AG04450 (cell line): ENCODE measurements at regions of chr17 and their contacts with region 1.

Region 1: DNA sequence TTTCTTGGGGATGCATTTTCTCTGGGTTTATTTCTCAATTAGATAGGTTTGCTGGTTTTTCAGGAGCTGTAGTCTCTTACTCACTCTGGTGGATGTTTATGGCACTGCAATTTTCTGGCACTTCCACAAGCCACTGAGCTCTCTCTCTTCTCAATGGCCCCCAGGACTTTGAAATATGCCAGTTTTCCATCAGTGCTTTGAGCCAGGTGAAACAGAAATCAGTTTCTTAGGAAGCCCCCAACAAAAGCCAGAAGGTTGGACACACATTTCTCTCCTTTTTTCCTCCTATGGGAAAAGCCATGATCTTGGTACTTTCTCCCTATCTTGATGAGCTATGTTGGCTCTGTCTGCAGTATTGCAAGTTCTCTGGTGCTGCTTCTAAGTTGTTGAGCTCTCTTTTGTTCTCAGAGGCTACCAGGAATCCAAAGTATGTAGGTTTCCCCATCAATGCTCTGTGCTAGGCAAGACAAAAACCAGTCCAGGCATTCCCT is 90.7 kb upstream of the SMIM36 start:
- DNase-seq: no peak
- H3K4me3 ChIP-seq: no peak overlapping the region
- H3K27ac ChIP-seq: no peak overlapping the region
- H3K27me3 ChIP-seq: no peaks in the 10 kb centered on the region
- CTCF ChIP-seq: peak; percentile 93

Region 2: GRCh38 chr17:55549140-55549539 is 52.8 kb before region 1 on chr17:
- CTCF ChIA-PET with region 1: interaction called, 18 read pairs
- POLR2A ChIA-PET with region 1: no interaction called
- DNase-seq: no peak
- H3K4me3 ChIP-seq: no peak overlapping the region
- H3K27ac ChIP-seq: no peak overlapping the region
- H3K27me3 ChIP-seq: no peaks in the 10 kb centered on the region
- CTCF ChIP-seq: peak; percentile 40

Region 3: DNA sequence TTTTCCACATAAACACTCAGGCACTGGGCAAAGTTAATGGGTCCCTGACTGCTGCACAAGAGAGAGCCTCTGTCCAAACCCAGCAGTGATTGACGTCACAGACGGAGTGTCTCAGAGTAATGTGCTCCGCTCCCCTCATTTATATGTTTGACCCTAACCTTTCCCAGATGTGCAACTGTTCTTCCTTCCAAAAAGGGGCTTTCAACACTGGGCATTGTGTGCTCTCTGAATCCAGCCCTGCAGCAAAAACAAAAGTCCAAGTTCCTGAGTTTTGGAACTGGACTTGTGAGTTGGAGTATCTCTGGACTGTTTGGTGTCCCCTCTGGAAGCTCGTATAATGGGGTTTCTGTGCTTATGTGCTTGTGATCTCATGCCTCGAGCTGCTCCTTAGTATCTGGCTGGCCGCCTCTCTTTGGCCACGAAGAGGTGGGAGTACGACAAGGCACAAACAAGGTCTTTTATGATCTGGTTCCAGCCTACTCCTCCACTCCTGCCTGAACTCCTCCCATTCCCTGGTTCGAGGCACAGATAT is 14.2 kb before region 1 on chr17:
- CTCF ChIA-PET with region 1: interaction called, 54 read pairs
- POLR2A ChIA-PET with region 1: interaction called, 7 read pairs
- DNase-seq: no peak
- H3K4me3 ChIP-seq: no peak overlapping the region
- H3K27ac ChIP-seq: peak overlapping the region; percentile 4
- H3K27me3 ChIP-seq: no peaks in the 10 kb centered on the region
- CTCF ChIP-seq: no peak

Region 4: GRCh38 chr17:55632893-55633292 is 31.0 kb after region 1 on chr17:
- CTCF ChIA-PET with region 1: interaction called, 14 read pairs
- POLR2A ChIA-PET with region 1: no interaction called
- DNase-seq: no peak
- H3K4me3 ChIP-seq: no peak overlapping the region
- H3K27ac ChIP-seq: no peak overlapping the region
- H3K27me3 ChIP-seq: peaks cover 2% of the 10 kb centered on the region
- CTCF ChIP-seq: no peak

Region 5: DNA sequence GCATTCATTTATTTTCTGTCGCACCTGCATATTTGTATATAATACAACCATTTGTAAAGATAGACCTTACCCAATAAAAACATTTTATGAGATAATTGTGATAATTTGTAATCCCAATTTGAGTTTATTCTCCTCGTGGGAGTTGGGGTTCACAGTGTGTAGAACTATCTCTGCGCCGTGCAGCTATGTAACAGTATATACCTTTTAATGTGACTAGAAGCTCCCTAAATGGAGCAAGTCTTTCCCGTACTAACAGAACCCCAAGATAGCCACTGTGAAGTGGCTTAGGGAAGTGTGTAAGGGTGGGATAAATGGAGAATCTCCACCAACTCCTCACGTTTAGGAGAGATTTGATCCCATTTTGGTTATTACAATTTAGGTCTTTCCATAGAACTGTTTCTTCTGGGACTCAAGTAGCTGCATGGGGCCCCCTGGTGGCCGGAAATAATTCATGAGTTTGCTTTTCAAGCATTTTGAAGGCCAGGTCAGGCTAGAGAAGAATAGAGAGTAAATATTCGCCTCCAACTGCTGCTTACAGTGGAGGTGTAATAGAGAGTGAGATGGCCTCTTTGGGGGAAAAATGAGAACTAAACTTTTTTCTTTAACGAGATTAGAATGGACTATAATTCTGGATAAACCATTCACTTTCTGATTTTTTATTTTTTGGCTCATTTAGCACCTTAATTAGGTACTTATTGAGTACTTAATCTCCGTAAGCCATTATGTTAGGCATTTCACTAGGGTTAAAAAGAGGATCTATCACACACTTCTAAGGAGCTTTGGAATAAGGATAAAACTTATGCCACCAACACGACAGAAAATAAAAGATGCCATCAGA is 116.2 kb after region 1 on chr17:
- CTCF ChIA-PET with region 1: interaction called, 80 read pairs
- POLR2A ChIA-PET with region 1: no interaction called
- DNase-seq: peak; percentile 48
- H3K4me3 ChIP-seq: no peak overlapping the region
- H3K27ac ChIP-seq: no peak overlapping the region
- H3K27me3 ChIP-seq: no peaks in the 10 kb centered on the region
- CTCF ChIP-seq: peak; percentile 80

Region 6: GRCh38 chr17:55735731-55736405 is 133.9 kb after region 1 on chr17:
- CTCF ChIA-PET with region 1: interaction called, 13 read pairs
- POLR2A ChIA-PET with region 1: no interaction called
- DNase-seq: no peak
- H3K4me3 ChIP-seq: no peak overlapping the region
- H3K27ac ChIP-seq: no peak overlapping the region
- H3K27me3 ChIP-seq: no peaks in the 10 kb centered on the region
- CTCF ChIP-seq: peak; percentile 79